ENCODE measurements at regions of chr12 and their contacts with region 1.

Region 1: DNA sequence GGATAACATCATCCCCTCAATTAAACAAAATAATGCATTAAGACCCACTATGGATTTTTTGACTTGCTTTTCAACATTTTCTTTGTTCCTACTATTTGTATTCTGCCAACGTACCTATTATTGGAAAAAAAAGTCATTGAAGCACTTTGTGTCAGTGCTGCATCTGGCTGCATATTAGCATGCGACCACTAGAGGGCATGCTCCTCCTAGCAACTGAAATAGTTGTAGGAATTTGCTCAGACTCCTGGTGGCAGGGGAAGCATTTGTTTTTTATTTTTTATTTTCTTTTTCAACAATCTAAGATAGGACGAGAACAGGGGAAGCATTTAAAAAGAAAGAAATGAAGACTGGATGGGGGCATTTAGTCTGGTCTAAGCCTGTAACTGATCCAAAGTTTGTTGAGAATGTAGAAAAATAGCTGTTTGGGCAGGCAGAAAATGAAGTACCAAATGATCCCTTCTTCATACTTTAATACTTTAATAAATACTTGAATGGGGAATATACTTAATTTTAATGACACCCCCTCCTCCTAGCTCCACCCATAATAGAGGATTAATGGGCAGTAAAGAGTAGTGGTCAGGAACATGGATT is 14.5 kb upstream of the CLEC4A start:
- DNase-seq: peak; percentile 61 to 90 (median 78)
- H3K4me3 ChIP-seq: peak overlapping the region in 24 of 59 donors; percentile 1 to 45 (median 24)
- H3K27ac ChIP-seq: peak overlapping the region in 16 of 59 donors; percentile 9 to 73 (median 46)
- H3K27me3 ChIP-seq: no peaks in the 10 kb centered on the region
- CTCF ChIP-seq: peak; percentile 96 to 100 (median 99)

Region 2: GRCh38 chr12:7884689-7885088 is 224.2 kb before region 1 on chr12:
- intact Hi-C with region 1: no loop called
- DNase-seq: no peak
- H3K4me3 ChIP-seq: no peak overlapping the region
- H3K27ac ChIP-seq: no peak overlapping the region
- H3K27me3 ChIP-seq: no peaks in the 10 kb centered on the region
- CTCF ChIP-seq: no peak

Region 3: DNA sequence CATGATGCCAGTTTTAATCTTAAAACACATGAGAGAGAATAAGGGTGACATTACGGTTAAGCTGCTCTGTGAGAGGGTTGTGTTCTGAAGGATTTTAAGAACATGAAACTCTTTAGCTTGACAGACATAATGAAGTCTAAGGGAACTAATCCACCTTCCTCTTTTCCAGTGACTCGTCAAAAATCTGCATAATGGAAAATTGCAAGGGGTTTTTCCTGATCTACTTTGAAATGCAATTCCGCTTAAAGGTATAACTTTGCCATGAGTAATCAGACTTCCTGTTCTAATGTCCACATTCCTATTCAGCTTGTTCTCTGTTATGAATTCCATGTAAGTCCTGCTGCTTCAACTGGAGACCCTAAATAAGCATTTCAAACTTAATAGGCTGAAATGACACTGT is 47.9 kb after region 1 on chr12 and contains the start of gene ZNF705A:
- intact Hi-C with region 1: loop called in 1 of 2 experiments (anchors 10 kb)
- DNase-seq: no peak
- H3K4me3 ChIP-seq: no peak within 1 kb of the TSS
- H3K27ac ChIP-seq: no peak within 1 kb of the TSS
- H3K27me3 ChIP-seq: no peaks in the 10 kb centered on the region
- CTCF ChIP-seq: no peak
- total RNA-seq, gene ZNF705A: 0.10 to 1.3 (median 0.22) TPM in 7 of 120 experiments, not detected in the others

Region 4: GRCh38 chr12:8226355-8226754 is 117.5 kb after region 1 on chr12:
- intact Hi-C with region 1: loop called in 1 of 2 experiments (anchors 10 kb)
- DNase-seq: no peak
- H3K4me3 ChIP-seq: no peak overlapping the region
- H3K27ac ChIP-seq: no peak overlapping the region
- H3K27me3 ChIP-seq: no peaks in the 10 kb centered on the region
- CTCF ChIP-seq: no peak

Measured in dorsolateral prefrontal cortex (tissue), 120 donors.